CD4-positive, alpha-beta memory T cell (primary cell): ENCODE measurements at regions of chr14 and their contacts with region 1.

Region 1: DNA sequence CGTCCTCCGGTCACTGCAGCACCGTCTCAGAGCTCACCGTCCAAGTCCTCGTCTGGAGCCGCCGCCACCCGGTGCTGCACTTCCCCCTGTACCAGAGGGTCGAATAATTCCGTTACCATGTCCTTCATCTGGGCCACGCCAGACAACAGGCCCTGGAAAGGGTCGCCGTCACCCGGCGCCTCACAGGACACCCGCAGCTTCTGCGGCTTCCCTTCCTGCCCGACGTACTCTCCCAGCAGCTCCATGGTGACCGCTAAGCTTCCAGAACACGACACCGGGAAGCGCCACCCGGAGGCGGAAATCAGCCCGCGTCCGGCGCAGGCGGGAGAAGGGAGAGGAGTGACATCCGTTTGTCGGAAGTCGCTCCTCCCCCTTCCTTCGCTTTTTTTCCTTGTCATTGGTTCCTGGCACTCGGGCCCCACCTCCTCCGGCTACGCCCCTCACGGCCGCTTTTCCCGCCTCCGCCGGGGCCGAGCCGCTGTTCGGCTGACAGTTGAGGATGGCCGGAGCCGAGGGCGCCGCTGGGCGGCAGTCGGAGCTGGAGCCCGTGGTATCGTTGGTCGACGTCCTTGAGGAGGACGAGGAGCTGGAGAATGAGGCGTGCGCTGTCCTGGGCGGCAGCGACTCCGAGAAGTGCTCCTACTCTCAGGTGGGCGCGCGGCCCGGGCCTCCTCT is at the starts of genes GON7 and UBR7:
- DNase-seq: peak; percentile 81 to 91 (median 85)
- H3K4me3 ChIP-seq: peak within 1 kb of the TSS; percentile 73 to 99
- H3K4me3 Mint-ChIP-seq: peak within 1 kb of the TSS; percentile 89 to 99 (median 97)
- H3K27ac ChIP-seq: peak within 1 kb of the TSS; percentile 77
- H3K27ac Mint-ChIP-seq: peak within 1 kb of the TSS; percentile 90 to 97 (median 96)
- H3K4me1 ChIP-seq: peaks cover 42% of the 10 kb centered on the region
- H3K4me1 Mint-ChIP-seq: peaks cover 27 to 50% (median 38%) of the 10 kb centered on the region in 4 donors
- H3K27me3 ChIP-seq: no peaks in the 10 kb centered on the region
- H3K27me3 Mint-ChIP-seq: no peaks in the 10 kb centered on the region
- total RNA-seq, gene GON7: 11.6 to 12.7 TPM
- total RNA-seq, gene UBR7: 17.5 to 17.8 TPM

Region 2: GRCh38 chr14:93219103-93219726 is 12.3 kb after region 1 on chr14:
- CTCF ChIA-PET with region 1: interaction called, 20 read pairs
- POLR2A ChIA-PET with region 1: no interaction called
- intact Hi-C with region 1: no loop called
- DNase-seq: peak; percentile 43 to 69 (median 52)
- H3K4me3 ChIP-seq: no peak overlapping the region
- H3K4me3 Mint-ChIP-seq: no peak overlapping the region
- H3K27ac ChIP-seq: no peak overlapping the region
- H3K27ac Mint-ChIP-seq: no peak overlapping the region
- H3K4me1 ChIP-seq: no peaks in the 10 kb centered on the region
- H3K4me1 Mint-ChIP-seq: peaks cover 0 to 2% (median 0%) of the 10 kb centered on the region in 4 donors
- H3K27me3 ChIP-seq: no peaks in the 10 kb centered on the region
- H3K27me3 Mint-ChIP-seq: no peaks in the 10 kb centered on the region

Region 3: GRCh38 chr14:93332853-93333630 is 126.1 kb after region 1 on chr14 and contains the start of gene BTBD7:
- CTCF ChIA-PET with region 1: interaction called, 3 read pairs
- POLR2A ChIA-PET with region 1: no interaction called
- intact Hi-C with region 1: loop called (anchors 2 kb)
- DNase-seq: peak; percentile 92 to 94 (median 93)
- H3K4me3 ChIP-seq: peak within 1 kb of the TSS; percentile 59 to 96
- H3K4me3 Mint-ChIP-seq: peak within 1 kb of the TSS; percentile 92 to 98 (median 94)
- H3K27ac ChIP-seq: peak within 1 kb of the TSS; percentile 83
- H3K27ac Mint-ChIP-seq: peak within 1 kb of the TSS; percentile 92 to 97 (median 96)
- H3K4me1 ChIP-seq: peaks cover 32% of the 10 kb centered on the region
- H3K4me1 Mint-ChIP-seq: peaks cover 33 to 59% (median 39%) of the 10 kb centered on the region in 4 donors
- H3K27me3 ChIP-seq: no peaks in the 10 kb centered on the region
- H3K27me3 Mint-ChIP-seq: no peaks in the 10 kb centered on the region
- total RNA-seq, gene BTBD7: 30.3 to 38.3 TPM